A549 (cell line): ENCODE measurements at regions of chr3 and their contacts with region 1.

Region 1: DNA sequence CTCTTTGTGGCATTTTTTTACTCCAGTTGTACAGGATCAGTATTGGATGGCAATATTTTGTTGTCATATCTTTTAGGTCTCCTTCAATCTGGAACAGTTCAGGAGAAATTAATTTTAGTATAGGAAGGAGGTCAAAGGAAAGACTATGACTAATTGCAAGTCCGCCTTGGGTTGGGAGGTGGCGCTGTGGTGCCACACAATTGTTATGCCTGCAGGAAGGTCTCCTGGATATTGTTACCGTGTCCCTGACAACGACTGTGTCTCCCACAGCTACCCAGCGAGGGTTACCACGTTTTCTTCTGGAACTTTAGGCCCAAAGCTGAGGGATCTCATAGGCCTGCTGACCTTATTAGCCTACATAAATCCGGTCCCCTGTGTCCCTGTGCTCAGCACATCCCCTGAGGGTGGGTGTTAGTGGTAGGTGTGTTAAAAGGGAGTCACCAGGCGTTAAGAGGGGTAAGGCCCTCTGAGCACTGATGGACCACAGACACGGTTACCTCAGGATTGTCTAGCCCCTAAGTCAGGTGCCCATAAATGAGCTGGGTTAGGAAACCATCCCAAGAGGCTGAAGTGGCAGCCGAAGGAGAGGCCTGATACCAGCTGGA is 31.5 kb downstream of the KCNAB1 start:
- DNase-seq: peak; percentile 29 to 74
- ATAC-seq: peak; percentile 79 to 91; a peak in 5 of 6 replicates
- H3K4me3 ChIP-seq: no peak overlapping the region
- H3K27ac ChIP-seq: no peak overlapping the region
- H3K4me1 ChIP-seq: no peaks in the 10 kb centered on the region
- CTCF ChIP-seq: peak; percentile 70
- EP300 ChIP-seq: no peak
- POLR2A ChIP-seq: no peak
- RAD21 ChIP-seq: peak; percentile 73 to 84

Region 2: GRCh38 chr3:156166808-156167207 is 14.9 kb after region 1 on chr3:
- CTCF ChIA-PET with region 1: interaction called, 28 read pairs
- POLR2A ChIA-PET with region 1: no interaction called
- DNase-seq: no peak
- ATAC-seq: no peak
- H3K4me3 ChIP-seq: no peak overlapping the region
- H3K27ac ChIP-seq: no peak overlapping the region
- H3K4me1 ChIP-seq: no peaks in the 10 kb centered on the region
- CTCF ChIP-seq: no peak
- EP300 ChIP-seq: no peak
- POLR2A ChIP-seq: no peak
- RAD21 ChIP-seq: no peak

Region 3: DNA sequence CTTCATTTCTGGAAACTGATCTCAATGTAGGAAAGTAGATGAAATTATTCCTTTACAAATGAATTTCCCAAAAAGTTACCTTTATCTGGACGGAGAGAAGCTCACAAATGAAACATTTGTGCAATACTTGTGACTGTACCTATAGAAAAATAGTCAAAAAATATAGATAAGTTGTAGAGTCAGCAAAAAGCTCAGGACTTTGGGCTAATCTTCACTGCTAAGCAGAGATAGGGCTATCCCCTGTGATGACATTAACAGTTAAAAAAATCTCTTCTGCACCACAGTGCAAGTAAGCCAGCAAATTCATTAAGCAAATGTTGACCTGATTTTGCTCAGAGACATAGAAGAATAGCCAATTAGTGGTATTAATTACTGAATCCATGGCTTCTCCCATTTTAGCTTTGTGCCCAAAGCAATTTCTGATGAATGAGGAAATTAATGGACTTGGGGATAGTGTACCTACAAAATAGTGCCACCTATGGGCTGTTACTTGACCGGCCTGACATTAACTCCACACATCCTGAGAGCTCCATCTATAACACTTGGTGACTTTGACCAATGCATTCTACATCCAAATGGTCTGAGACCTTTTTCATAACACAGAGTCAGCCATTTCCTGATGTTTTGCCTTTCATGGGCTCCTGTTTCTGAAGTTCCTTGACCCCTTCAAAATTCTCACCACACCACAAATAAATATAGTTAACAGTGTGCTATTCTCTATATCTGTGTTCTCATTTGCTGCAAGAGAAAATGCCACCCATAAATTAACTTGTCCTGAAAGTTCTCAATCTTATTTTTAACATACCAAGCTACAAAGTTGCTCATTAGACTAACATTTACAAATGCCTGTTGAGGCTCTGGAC is 298.0 kb after region 1 on chr3:
- CTCF ChIA-PET with region 1: interaction called, 14 read pairs
- POLR2A ChIA-PET with region 1: no interaction called
- DNase-seq: peak; percentile 28 to 32
- ATAC-seq: peak; percentile 72 to 87; a peak in 4 of 6 replicates
- H3K4me3 ChIP-seq: no peak overlapping the region
- H3K27ac ChIP-seq: no peak overlapping the region
- H3K4me1 ChIP-seq: no peaks in the 10 kb centered on the region
- CTCF ChIP-seq: peak; percentile 44
- EP300 ChIP-seq: no peak
- POLR2A ChIP-seq: no peak
- RAD21 ChIP-seq: peak; percentile 25 to 27; a peak in 1 of 5 replicates

Region 4: GRCh38 chr3:157081681-157082210 is 929.8 kb after region 1 on chr3:
- CTCF ChIA-PET with region 1: interaction called, 22 read pairs
- POLR2A ChIA-PET with region 1: no interaction called
- DNase-seq: peak; percentile 85 to 91
- ATAC-seq: peak; percentile 98 to 99
- H3K4me3 ChIP-seq: no peak overlapping the region
- H3K27ac ChIP-seq: peak overlapping the region; percentile 49 to 72; a peak in 5 of 6 replicates
- H3K4me1 ChIP-seq: peaks cover 7% of the 10 kb centered on the region; the same call in 1 of the 3 replicates
- CTCF ChIP-seq: peak; percentile 90
- EP300 ChIP-seq: no peak
- POLR2A ChIP-seq: no peak
- RAD21 ChIP-seq: peak; percentile 98

Region 5: GRCh38 chr3:157201648-157202278 is 1049.8 kb after region 1 on chr3:
- CTCF ChIA-PET with region 1: interaction called, 35 read pairs
- POLR2A ChIA-PET with region 1: no interaction called
- DNase-seq: peak; percentile 33 to 57
- ATAC-seq: peak; percentile 66 to 80; a peak in 4 of 6 replicates
- H3K4me3 ChIP-seq: no peak overlapping the region
- H3K27ac ChIP-seq: no peak overlapping the region
- H3K4me1 ChIP-seq: no peaks in the 10 kb centered on the region
- CTCF ChIP-seq: peak; percentile 62
- EP300 ChIP-seq: no peak
- POLR2A ChIP-seq: no peak
- RAD21 ChIP-seq: peak; percentile 56 to 61